ENCODE measurements at regions of chr3 and their contacts with region 1.

Region 1: DNA sequence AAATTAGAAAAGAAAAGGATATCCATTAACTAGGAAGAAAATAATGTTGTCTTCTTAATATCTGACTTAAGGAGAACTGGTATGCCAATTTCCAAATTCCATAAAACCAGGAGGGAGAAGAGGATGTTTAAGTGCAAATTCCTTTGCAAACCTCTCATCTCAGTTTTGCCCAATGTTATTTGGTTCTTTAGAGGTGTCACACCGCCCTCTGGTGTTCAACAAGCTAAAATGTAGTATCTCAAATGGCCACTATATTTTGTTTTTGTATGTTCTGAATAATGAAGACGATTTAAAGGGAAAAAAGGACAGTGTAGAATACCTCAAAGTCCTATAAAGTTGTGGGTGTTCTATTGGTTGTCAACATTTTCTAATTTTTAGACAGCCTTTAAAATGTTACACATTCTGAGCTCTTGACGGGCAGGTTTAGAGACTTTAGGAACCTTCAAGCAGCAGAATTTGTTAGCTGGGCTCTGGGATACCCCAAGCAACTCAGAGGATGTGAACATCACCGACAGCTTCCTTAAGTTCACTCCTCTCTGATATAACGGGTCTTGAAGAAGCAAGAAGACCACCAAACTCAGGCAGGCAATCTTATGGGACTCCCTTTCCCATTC is 458.3 kb downstream of the MFSD1 start:
- DNase-seq: peak; percentile 19 to 67 (median 29)
- ATAC-seq: peak; percentile 83
- H3K4me3 ChIP-seq: no peak overlapping the region
- H3K27ac ChIP-seq: no peak overlapping the region
- H3K4me1 ChIP-seq: no peaks in the 10 kb centered on the region
- H3K27me3 ChIP-seq: no peaks in the 10 kb centered on the region
- CTCF ChIP-seq: peak; percentile 61 to 78 (median 78)
- EP300 ChIP-seq: no peak
- POLR2A ChIP-seq: no peak
- RAD21 ChIP-seq: peak; percentile 74 to 85

Region 2: DNA sequence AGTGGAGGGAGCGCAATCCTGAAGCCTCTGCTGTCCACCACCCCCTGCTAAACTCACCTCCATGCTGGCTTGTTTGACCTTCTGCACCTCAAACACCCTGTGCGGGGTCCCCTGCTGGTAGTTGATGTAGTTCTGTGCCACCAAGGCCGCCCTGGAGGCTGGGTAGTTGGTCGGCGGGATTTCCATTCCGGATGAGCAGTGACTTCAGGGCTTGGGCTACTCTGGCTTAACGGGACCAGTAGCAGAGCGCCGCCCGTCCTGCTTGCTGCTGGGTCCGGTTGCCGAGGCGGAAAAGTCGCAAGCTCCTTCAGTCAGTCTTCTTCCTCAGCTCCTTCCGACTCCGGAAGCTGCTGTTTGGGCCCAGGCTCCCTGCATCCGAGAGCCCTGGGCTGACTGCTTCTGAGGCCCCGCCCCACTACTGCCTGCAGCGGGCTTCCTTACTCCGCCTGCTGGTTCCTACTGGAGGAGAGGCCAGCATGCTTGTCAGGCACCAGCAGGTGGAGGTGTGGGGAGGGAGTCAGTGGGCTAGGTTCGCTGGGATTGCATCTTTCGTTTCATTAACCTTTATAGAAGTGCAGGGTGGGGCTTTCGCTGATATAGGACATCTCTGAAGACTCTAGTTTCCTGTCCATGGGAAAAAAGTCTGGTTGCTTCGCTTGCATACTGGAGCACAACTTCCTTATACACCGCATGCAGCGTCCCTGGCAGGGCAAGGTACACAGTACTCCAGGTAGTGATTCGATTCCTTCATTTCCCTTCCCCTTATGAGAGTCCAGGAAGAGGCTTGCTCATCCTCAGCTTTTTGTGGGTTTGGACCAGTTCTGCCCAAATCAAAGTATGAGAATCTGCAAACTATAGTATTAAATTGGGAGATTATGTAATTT is 587.6 kb before region 1 on chr3 and contains the start of gene LXN:
- CTCF ChIA-PET with region 1: no interaction called
- POLR2A ChIA-PET with region 1: no interaction called
- in situ Hi-C with region 1: no loop called
- intact Hi-C with region 1: loop called (anchors 5 kb)
- DNase-seq: peak; percentile 25 to 50 (median 44)
- ATAC-seq: peak; percentile 92
- H3K4me3 ChIP-seq: no peak within 1 kb of the TSS
- H3K27ac ChIP-seq: no peak within 1 kb of the TSS
- H3K4me1 ChIP-seq: peaks cover 2 to 6% of the 10 kb centered on the region in 2 experiments; a peak in 2 of 5 replicates
- H3K27me3 ChIP-seq: no peaks in the 10 kb centered on the region
- CTCF ChIP-seq: peak; percentile 46 to 85 (median 63)
- EP300 ChIP-seq: no peak
- POLR2A ChIP-seq: no peak
- RAD21 ChIP-seq: peak in 1 of 2 experiments; percentile 24; a peak in 2 of 4 replicates
- polyA plus RNA-seq, gene LXN: 0.08 TPM in 1 of 2 experiments, not detected in the other

Region 3: DNA sequence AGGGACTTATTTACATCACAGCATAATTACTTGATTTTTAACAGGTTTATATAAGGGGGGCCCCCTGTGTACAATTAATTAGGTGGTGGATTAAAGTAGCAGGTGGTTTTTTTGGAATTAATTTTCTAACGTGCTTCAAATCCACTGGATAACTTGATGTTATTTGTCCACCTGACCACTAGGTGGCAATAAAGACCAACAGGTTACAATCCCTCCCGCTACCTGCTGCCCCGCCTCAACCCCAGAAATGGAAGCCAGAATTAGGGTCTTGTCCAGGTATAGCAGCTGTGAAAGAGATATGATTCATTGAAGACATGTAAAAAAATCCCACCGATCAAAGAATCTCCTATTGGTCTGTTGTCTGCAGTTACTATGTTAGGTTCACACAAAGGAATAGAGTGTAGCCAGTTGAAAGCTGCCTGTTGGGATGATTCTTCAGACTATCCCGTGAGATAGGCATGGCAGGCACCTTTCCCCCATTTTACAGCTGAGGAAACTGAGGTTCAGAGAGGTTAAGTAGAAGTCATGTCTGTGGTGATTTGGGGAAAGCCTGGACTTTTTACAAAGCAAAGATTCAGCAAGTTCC is 414.3 kb before region 1 on chr3:
- CTCF ChIA-PET with region 1: interaction called, 15 read pairs
- POLR2A ChIA-PET with region 1: no interaction called
- in situ Hi-C with region 1: loop called (anchors 5 kb)
- intact Hi-C with region 1: loop called (anchors 1 kb)
- DNase-seq: peak; percentile 64 to 70 (median 70)
- ATAC-seq: peak; percentile 86
- H3K4me3 ChIP-seq: no peak overlapping the region
- H3K27ac ChIP-seq: no peak overlapping the region
- H3K4me1 ChIP-seq: no peaks in the 10 kb centered on the region
- H3K27me3 ChIP-seq: peaks cover 4 to 22% of the 10 kb centered on the region in 2 experiments; a peak in 3 of 5 replicates
- CTCF ChIP-seq: peak; percentile 68 to 80 (median 69)
- EP300 ChIP-seq: no peak
- POLR2A ChIP-seq: no peak
- RAD21 ChIP-seq: peak; percentile 73 to 82

Region 4: DNA sequence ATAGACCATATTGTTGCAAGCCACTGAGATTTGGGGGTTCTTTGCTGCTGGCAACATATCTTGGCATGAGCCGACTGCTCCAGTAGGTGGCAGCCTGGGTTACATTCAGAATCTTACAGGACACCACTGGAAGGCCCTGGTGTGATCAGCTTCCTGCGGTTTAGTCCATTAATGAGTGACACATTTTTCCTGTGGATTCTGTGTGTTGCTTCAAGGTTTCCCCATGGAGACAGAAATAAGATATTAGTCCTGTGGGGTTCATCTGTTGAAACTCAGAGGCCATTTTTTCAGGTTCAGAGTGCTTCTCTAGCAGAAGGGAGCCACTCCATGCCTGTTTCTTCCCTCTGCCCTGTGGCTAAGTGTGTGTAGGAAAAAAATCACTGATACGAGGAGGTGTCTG is 342.1 kb before region 1 on chr3:
- CTCF ChIA-PET with region 1: interaction called, 3 read pairs
- POLR2A ChIA-PET with region 1: no interaction called
- in situ Hi-C with region 1: no loop called
- intact Hi-C with region 1: loop called (anchors 2 kb)
- DNase-seq: peak; percentile 28 to 55 (median 34)
- ATAC-seq: peak; percentile 93
- H3K4me3 ChIP-seq: no peak overlapping the region
- H3K27ac ChIP-seq: no peak overlapping the region
- H3K4me1 ChIP-seq: no peaks in the 10 kb centered on the region
- H3K27me3 ChIP-seq: no peaks in the 10 kb centered on the region
- CTCF ChIP-seq: peak; percentile 49 to 69 (median 62)
- EP300 ChIP-seq: no peak
- POLR2A ChIP-seq: no peak
- RAD21 ChIP-seq: peak; percentile 20 to 62; a peak in 3 of 4 replicates

Region 5: DNA sequence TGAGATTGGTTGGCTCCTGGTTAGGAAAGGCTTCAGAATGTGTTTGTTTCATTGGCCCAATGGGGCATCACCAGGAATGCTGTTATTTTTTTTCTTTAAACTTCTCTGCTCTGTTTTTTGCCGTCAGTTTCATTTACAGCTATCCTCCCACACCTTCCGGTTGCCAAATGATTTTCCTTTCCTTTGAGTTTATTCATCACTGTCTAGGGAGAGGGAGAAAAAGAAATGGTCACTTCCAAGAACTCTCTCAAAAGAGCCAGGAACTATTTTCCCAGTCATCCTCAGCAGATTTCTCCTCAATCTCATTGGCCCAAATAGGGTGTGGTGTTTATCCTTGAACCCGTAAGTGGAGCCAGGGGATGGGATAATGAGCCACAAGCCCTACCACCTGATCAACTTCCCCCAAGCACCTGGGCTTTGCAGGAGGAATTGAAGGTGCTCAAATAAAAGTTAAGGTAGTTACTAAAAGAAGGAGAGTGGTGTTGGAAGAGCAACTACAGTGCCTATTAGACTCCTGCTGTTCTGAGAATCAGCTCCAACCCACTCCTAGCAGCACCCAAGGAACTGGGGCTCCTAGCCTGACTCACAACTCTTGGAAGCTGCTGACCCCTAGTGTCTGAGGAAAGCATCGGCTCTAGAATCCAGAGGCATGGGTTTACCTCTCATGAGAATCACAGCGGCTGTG is 544.7 kb after region 1 on chr3:
- CTCF ChIA-PET with region 1: interaction called, 8 read pairs
- POLR2A ChIA-PET with region 1: interaction called, 7 read pairs
- in situ Hi-C with region 1: loop called (anchors 5 kb)
- intact Hi-C with region 1: loop called (anchors 1 kb)
- DNase-seq: peak; percentile 32 to 65 (median 42)
- ATAC-seq: peak; percentile 97
- H3K4me3 ChIP-seq: no peak overlapping the region
- H3K27ac ChIP-seq: no peak overlapping the region
- H3K4me1 ChIP-seq: no peaks in the 10 kb centered on the region
- H3K27me3 ChIP-seq: no peaks in the 10 kb centered on the region
- CTCF ChIP-seq: peak; percentile 66 to 78 (median 78)
- EP300 ChIP-seq: no peak
- POLR2A ChIP-seq: no peak
- RAD21 ChIP-seq: peak; percentile 54 to 80

Region 6: GRCh38 chr3:159813822-159814523 is 553.8 kb after region 1 on chr3:
- CTCF ChIA-PET with region 1: no interaction called
- POLR2A ChIA-PET with region 1: no interaction called
- in situ Hi-C with region 1: loop called (anchors 5 kb)
- intact Hi-C with region 1: no loop called
- DNase-seq: no peak
- ATAC-seq: no peak
- H3K4me3 ChIP-seq: no peak overlapping the region
- H3K27ac ChIP-seq: no peak overlapping the region
- H3K4me1 ChIP-seq: no peaks in the 10 kb centered on the region
- H3K27me3 ChIP-seq: 0 out of 5 replicates have a peak, but pooled peaks cover 0 to 4% of the 10 kb centered on the region in 2 experiments
- CTCF ChIP-seq: no peak
- EP300 ChIP-seq: no peak
- POLR2A ChIP-seq: no peak
- RAD21 ChIP-seq: no peak

Region 7: GRCh38 chr3:160003520-160004128 is 743.5 kb after region 1 on chr3:
- CTCF ChIA-PET with region 1: no interaction called
- POLR2A ChIA-PET with region 1: no interaction called
- in situ Hi-C with region 1: loop called (anchors 10 kb)
- intact Hi-C with region 1: loop called (anchors 5 kb)
- DNase-seq: peak in 3 of 4 experiments; percentile 16 to 34 (median 22)
- ATAC-seq: peak; percentile 86
- H3K4me3 ChIP-seq: no peak overlapping the region
- H3K27ac ChIP-seq: no peak overlapping the region
- H3K4me1 ChIP-seq: no peaks in the 10 kb centered on the region
- H3K27me3 ChIP-seq: peaks cover 0 to 2% of the 10 kb centered on the region in 2 experiments; a peak in 1 of 5 replicates
- CTCF ChIP-seq: peak; percentile 35 to 50 (median 44); a peak in 5 of 6 replicates
- EP300 ChIP-seq: no peak
- POLR2A ChIP-seq: no peak
- RAD21 ChIP-seq: peak; percentile 26 to 51; a peak in 2 of 4 replicates

Measured in K562 (cell line).